CD8-positive, alpha-beta T cell (primary cell): ENCODE measurements at regions of chr3 and their contacts with region 1.

Region 1: GRCh38 chr3:195542698-195543499 is at the start of gene PPP1R2:
- DNase-seq: peak; percentile 65 to 96 (median 93)
- ATAC-seq: peak; percentile 86
- H3K4me3 ChIP-seq: peak within 1 kb of the TSS; percentile 90 to 91
- H3K4me3 Mint-ChIP-seq: peak within 1 kb of the TSS; percentile 93
- H3K27ac ChIP-seq: peak within 1 kb of the TSS; percentile 92 to 98
- H3K27ac Mint-ChIP-seq: peak within 1 kb of the TSS; percentile 97
- H3K4me1 ChIP-seq: peaks cover 67% of the 10 kb centered on the region
- H3K4me1 Mint-ChIP-seq: peaks cover 75% of the 10 kb centered on the region
- H3K27me3 ChIP-seq: no peaks in the 10 kb centered on the region
- H3K27me3 Mint-ChIP-seq: no peaks in the 10 kb centered on the region
- CTCF ChIP-seq: no peak
- total RNA-seq, gene PPP1R2: 160 to 166 TPM

Region 2: DNA sequence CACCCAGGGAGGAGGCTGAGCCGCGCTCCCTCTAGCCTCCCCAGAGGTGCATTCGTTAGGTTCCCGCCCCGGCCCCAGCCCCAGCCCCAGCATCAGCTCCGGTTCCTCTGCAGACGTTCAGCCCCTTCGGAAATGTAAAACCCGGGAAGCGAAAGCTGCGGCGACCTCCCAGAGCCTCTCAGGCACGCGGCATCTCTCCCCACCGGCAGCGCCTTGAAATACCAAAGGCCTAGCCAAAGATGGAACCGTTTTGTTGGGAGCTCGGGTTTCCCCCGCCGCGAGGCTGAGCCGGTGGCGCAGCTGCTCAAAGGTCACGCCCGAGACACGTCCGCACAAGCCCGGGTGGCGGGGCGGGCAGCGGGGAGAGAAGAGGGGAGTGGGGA is 1484.7 kb before region 1 on chr3:
- CTCF ChIA-PET with region 1: no interaction called
- POLR2A ChIA-PET with region 1: no interaction called
- intact Hi-C with region 1: no loop called
- DNase-seq: peak in 4 of 9 experiments; percentile 13 to 38 (median 16)
- ATAC-seq: no peak
- H3K4me3 ChIP-seq: peak overlapping the region; percentile 6 to 35
- H3K4me3 Mint-ChIP-seq: peak overlapping the region; percentile 69
- H3K27ac ChIP-seq: no peak overlapping the region
- H3K27ac Mint-ChIP-seq: no peak overlapping the region
- H3K4me1 ChIP-seq: peaks cover 3% of the 10 kb centered on the region
- H3K4me1 Mint-ChIP-seq: peaks cover 7% of the 10 kb centered on the region
- H3K27me3 ChIP-seq: no peaks in the 10 kb centered on the region
- H3K27me3 Mint-ChIP-seq: peaks cover 23% of the 10 kb centered on the region
- CTCF ChIP-seq: no peak

Region 3: GRCh38 chr3:194486540-194487288 is 1056.2 kb before region 1 on chr3 and contains the start of gene ATP13A3:
- CTCF ChIA-PET with region 1: no interaction called
- POLR2A ChIA-PET with region 1: no interaction called
- intact Hi-C with region 1: loop called in 1 of 2 experiments (anchors 10 kb)
- DNase-seq: peak; percentile 83 to 96 (median 90)
- ATAC-seq: peak; percentile 80
- H3K4me3 ChIP-seq: peak within 1 kb of the TSS; percentile 74 to 98
- H3K4me3 Mint-ChIP-seq: peak within 1 kb of the TSS; percentile 93
- H3K27ac ChIP-seq: peak within 1 kb of the TSS; percentile 58 to 85
- H3K27ac Mint-ChIP-seq: peak within 1 kb of the TSS; percentile 92
- H3K4me1 ChIP-seq: peaks cover 29% of the 10 kb centered on the region
- H3K4me1 Mint-ChIP-seq: peaks cover 43% of the 10 kb centered on the region
- H3K27me3 ChIP-seq: no peaks in the 10 kb centered on the region
- H3K27me3 Mint-ChIP-seq: no peaks in the 10 kb centered on the region
- CTCF ChIP-seq: no peak
- total RNA-seq, gene ATP13A3: 50.2 to 52.8 TPM

Region 4: DNA sequence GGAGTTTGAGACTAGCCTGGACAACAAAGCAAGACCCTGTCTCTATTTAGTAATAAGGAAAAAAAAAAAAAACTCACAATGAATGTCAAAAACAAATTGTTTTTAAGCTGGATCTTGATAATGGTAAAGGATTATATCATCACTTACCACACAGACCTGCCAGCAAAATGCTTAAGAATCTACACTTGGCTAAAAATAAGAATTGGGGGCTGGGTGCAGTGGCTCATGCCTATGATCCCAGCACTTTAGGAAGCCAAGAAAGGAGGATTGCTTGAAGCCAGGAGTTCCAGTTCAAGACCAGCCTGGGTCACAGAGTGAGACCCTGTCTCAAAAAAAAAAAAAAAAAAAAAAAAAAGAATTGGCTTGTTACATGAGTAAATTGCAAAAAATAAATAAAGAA is 131.1 kb before region 1 on chr3:
- CTCF ChIA-PET with region 1: no interaction called
- POLR2A ChIA-PET with region 1: no interaction called
- intact Hi-C with region 1: no loop called
- DNase-seq: no peak
- ATAC-seq: no peak
- H3K4me3 ChIP-seq: no peak overlapping the region
- H3K4me3 Mint-ChIP-seq: no peak overlapping the region
- H3K27ac ChIP-seq: no peak overlapping the region
- H3K27ac Mint-ChIP-seq: no peak overlapping the region
- H3K4me1 ChIP-seq: peaks cover 8% of the 10 kb centered on the region
- H3K4me1 Mint-ChIP-seq: peaks cover 67% of the 10 kb centered on the region
- H3K27me3 ChIP-seq: no peaks in the 10 kb centered on the region
- H3K27me3 Mint-ChIP-seq: no peaks in the 10 kb centered on the region
- CTCF ChIP-seq: no peak

Region 5: GRCh38 chr3:195442573-195443390 is 100.1 kb before region 1 on chr3 and contains the start of gene ACAP2:
- CTCF ChIA-PET with region 1: no interaction called
- POLR2A ChIA-PET with region 1: interaction called, 4 read pairs
- intact Hi-C with region 1: loop called (anchors 1 to 2 kb)
- DNase-seq: peak; percentile 95 to 99 (median 99)
- ATAC-seq: peak; percentile 90
- H3K4me3 ChIP-seq: peak within 1 kb of the TSS; percentile 82 to 88
- H3K4me3 Mint-ChIP-seq: peak within 1 kb of the TSS; percentile 95
- H3K27ac ChIP-seq: peak within 1 kb of the TSS; percentile 74 to 82
- H3K27ac Mint-ChIP-seq: peak within 1 kb of the TSS; percentile 92
- H3K4me1 ChIP-seq: peaks cover 39% of the 10 kb centered on the region
- H3K4me1 Mint-ChIP-seq: peaks cover 64% of the 10 kb centered on the region
- H3K27me3 ChIP-seq: no peaks in the 10 kb centered on the region
- H3K27me3 Mint-ChIP-seq: no peaks in the 10 kb centered on the region
- CTCF ChIP-seq: no peak
- total RNA-seq, gene ACAP2: 38.9 to 41.1 TPM

Region 6: DNA sequence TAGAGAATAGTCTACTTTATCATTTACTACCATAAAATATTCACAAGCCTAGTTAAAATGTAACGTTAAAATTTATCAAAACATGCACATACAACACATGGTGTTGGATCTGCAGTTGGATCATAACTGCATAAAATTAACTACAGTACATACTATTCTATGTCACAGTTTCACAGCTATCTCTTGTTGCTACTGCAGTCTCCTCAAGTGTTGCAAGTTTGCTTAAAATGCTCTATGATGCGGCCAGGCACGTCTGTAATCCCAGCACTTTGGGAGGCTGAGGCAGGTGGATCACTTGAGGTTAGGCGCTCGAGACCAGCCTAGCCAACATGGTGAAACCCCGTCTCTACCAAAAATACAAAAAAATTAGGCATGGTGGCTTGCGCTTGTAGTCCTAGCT is 10.1 kb before region 1 on chr3:
- CTCF ChIA-PET with region 1: interaction called, 3 read pairs
- POLR2A ChIA-PET with region 1: interaction called, 12 read pairs
- intact Hi-C with region 1: loop called in 1 of 2 experiments (anchors 1 kb)
- DNase-seq: no peak
- ATAC-seq: no peak
- H3K4me3 ChIP-seq: no peak overlapping the region
- H3K4me3 Mint-ChIP-seq: peak overlapping the region; percentile 40
- H3K27ac ChIP-seq: no peak overlapping the region
- H3K27ac Mint-ChIP-seq: peak overlapping the region; percentile 69
- H3K4me1 ChIP-seq: peaks cover 75% of the 10 kb centered on the region
- H3K4me1 Mint-ChIP-seq: peaks cover 85% of the 10 kb centered on the region
- H3K27me3 ChIP-seq: no peaks in the 10 kb centered on the region
- H3K27me3 Mint-ChIP-seq: no peaks in the 10 kb centered on the region
- CTCF ChIP-seq: no peak

Region 7: DNA sequence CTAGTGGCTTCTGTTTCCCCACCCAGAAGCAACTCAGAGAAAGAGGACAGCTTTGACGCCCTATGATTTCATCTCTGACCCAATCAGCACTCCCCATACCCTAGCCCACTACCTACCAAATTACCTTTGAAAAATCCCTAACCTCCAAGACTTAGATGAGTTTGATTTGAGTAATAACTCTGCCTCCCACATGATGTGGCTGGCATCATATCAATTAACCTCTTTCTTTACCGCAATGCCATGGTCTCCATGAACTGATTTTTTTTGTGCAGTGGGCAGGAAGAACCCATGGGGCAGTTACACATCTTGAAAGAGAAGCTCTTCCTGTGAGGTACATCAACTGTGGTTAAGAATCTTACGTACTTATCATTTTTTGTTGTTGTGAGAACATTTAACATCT is 66.3 kb after region 1 on chr3:
- CTCF ChIA-PET with region 1: no interaction called
- POLR2A ChIA-PET with region 1: interaction called, 8 read pairs
- intact Hi-C with region 1: loop called in 1 of 2 experiments (anchors 5 kb)
- DNase-seq: peak in 5 of 9 experiments; percentile 34 to 88 (median 69)
- ATAC-seq: peak; percentile 88
- H3K4me3 ChIP-seq: no peak overlapping the region
- H3K4me3 Mint-ChIP-seq: peak overlapping the region; percentile 8
- H3K27ac ChIP-seq: peak overlapping the region in 1 of 2 experiments; percentile 13
- H3K27ac Mint-ChIP-seq: peak overlapping the region; percentile 74
- H3K4me1 ChIP-seq: peaks cover 28% of the 10 kb centered on the region
- H3K4me1 Mint-ChIP-seq: peaks cover 50% of the 10 kb centered on the region
- H3K27me3 ChIP-seq: no peaks in the 10 kb centered on the region
- H3K27me3 Mint-ChIP-seq: no peaks in the 10 kb centered on the region
- CTCF ChIP-seq: no peak